Activated CD8-positive, alpha-beta T cell treated with anti-CD3 and anti-CD28 coated beads for 36 hours (primary cell): ENCODE measurements at regions of chr13 and their contacts with region 1.

Region 1: GRCh38 chr13:27424246-27425157 is at the start of gene GTF3A:
- DNase-seq: peak; percentile 85
- ATAC-seq: peak; percentile 73
- H3K4me3 Mint-ChIP-seq: peak within 1 kb of the TSS; percentile 84
- H3K27ac Mint-ChIP-seq: peak within 1 kb of the TSS; percentile 96
- H3K4me1 Mint-ChIP-seq: peaks cover 34% of the 10 kb centered on the region
- H3K27me3 Mint-ChIP-seq: no peaks in the 10 kb centered on the region
- CTCF ChIP-seq: no peak
- total RNA-seq, gene GTF3A: 278 to 282 TPM

Region 2: GRCh38 chr13:26985285-26985878 is 439.1 kb before region 1 on chr13:
- CTCF ChIA-PET with region 1: no interaction called
- POLR2A ChIA-PET with region 1: no interaction called
- intact Hi-C with region 1: no loop called
- DNase-seq: peak; percentile 86
- ATAC-seq: peak; percentile 90
- H3K4me3 Mint-ChIP-seq: no peak overlapping the region
- H3K27ac Mint-ChIP-seq: no peak overlapping the region
- H3K4me1 Mint-ChIP-seq: no peaks in the 10 kb centered on the region
- H3K27me3 Mint-ChIP-seq: peaks cover 11% of the 10 kb centered on the region
- CTCF ChIP-seq: peak; percentile 76

Region 3: GRCh38 chr13:27251166-27252091 is 173.1 kb before region 1 on chr13 and contains the start of gene RPL21:
- CTCF ChIA-PET with region 1: no interaction called
- POLR2A ChIA-PET with region 1: interaction called, 4 read pairs
- intact Hi-C with region 1: loop called (anchors 10 kb)
- DNase-seq: peak; percentile 94
- ATAC-seq: peak; percentile 94
- H3K4me3 Mint-ChIP-seq: peak within 1 kb of the TSS; percentile 96
- H3K27ac Mint-ChIP-seq: peak within 1 kb of the TSS; percentile 99
- H3K4me1 Mint-ChIP-seq: peaks cover 37% of the 10 kb centered on the region
- H3K27me3 Mint-ChIP-seq: no peaks in the 10 kb centered on the region
- CTCF ChIP-seq: no peak
- total RNA-seq, gene RPL21: 1,401 to 1,445 TPM

Region 4: DNA sequence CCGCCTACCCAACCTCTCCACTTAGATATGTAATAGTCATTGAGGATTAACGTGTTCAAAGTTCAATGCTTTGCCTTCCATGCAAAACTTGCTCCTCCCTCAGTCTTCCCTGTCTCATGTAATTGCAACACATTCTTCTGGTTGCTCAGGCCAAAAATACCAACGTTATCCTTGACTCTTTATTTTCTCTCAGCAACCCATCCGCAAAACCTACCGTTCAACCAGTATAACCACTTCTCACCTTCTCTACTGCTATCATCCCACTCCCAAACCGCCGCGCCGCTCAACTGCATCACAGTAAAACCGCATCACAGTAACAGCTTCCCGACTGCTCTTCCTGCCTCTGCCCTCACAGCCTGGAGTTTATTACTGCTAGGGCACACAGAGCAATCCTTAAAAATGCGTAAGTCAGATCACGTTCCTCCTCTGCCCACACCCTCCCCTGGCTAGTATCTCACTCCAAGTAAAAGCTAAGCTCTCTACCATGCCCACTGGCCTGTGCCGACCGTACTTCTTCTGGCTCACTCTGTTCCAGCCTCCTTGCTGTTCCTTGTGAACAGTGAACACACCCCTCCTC is 17.7 kb after region 1 on chr13:
- CTCF ChIA-PET with region 1: no interaction called
- POLR2A ChIA-PET with region 1: interaction called, 71 read pairs
- intact Hi-C with region 1: no loop called
- DNase-seq: peak; percentile 41
- ATAC-seq: peak; percentile 45
- H3K4me3 Mint-ChIP-seq: peak overlapping the region; percentile 45
- H3K27ac Mint-ChIP-seq: peak overlapping the region; percentile 59
- H3K4me1 Mint-ChIP-seq: peaks cover 48% of the 10 kb centered on the region
- H3K27me3 Mint-ChIP-seq: no peaks in the 10 kb centered on the region
- CTCF ChIP-seq: no peak

Region 5: DNA sequence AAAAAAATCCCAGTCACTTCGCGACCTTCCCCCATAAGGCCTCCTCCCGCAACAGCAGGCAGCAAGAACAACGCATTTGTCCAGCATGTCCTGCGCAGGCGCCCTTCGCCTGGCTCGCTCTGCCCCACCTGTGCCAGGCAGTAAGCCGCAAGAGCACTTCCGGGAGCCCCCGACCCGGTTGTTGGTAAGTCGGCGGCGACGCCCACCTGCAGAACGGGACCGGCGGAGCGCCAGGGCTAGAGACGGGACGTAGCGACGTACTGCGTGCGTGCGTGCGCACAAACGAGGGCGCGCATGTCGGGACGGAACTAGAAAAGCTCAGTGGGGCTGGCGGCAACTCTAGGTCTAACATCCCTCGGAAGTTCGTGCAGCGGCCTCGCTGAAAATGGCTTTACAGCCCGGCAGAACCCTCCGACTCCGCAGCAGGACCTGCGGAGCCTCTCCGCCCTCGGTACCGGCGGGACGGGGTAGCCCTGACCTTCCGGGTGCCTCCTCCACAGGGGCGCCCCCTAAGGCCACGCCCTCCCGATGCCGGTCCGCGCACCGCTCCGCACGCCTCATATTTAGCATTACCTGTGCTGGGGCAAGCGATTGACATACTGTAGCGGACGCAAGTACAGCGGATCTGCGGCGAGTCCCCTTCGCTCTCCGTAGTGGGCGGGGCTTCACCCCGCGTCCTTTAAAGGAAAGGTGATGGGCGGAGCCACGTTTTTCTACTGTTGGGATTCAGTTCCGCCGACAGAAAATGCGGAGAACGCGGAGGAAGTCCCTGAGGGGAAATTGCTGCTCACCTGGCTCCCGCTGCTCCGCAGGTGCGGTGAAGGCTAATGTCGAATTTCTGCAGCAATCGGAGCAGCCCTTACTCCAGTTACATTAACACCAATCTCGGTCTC is 25.7 kb after region 1 on chr13 and contains the start of gene MTIF3:
- CTCF ChIA-PET with region 1: interaction called, 35 read pairs
- POLR2A ChIA-PET with region 1: interaction called, 71 read pairs
- intact Hi-C with region 1: loop called (anchors 2 kb)
- DNase-seq: peak; percentile 98
- ATAC-seq: peak; percentile 86
- H3K4me3 Mint-ChIP-seq: peak within 1 kb of the TSS; percentile 82
- H3K27ac Mint-ChIP-seq: peak within 1 kb of the TSS; percentile 98
- H3K4me1 Mint-ChIP-seq: peaks cover 46% of the 10 kb centered on the region
- H3K27me3 Mint-ChIP-seq: no peaks in the 10 kb centered on the region
- CTCF ChIP-seq: no peak
- total RNA-seq, gene MTIF3: 28.0 to 29.6 TPM

Region 6: DNA sequence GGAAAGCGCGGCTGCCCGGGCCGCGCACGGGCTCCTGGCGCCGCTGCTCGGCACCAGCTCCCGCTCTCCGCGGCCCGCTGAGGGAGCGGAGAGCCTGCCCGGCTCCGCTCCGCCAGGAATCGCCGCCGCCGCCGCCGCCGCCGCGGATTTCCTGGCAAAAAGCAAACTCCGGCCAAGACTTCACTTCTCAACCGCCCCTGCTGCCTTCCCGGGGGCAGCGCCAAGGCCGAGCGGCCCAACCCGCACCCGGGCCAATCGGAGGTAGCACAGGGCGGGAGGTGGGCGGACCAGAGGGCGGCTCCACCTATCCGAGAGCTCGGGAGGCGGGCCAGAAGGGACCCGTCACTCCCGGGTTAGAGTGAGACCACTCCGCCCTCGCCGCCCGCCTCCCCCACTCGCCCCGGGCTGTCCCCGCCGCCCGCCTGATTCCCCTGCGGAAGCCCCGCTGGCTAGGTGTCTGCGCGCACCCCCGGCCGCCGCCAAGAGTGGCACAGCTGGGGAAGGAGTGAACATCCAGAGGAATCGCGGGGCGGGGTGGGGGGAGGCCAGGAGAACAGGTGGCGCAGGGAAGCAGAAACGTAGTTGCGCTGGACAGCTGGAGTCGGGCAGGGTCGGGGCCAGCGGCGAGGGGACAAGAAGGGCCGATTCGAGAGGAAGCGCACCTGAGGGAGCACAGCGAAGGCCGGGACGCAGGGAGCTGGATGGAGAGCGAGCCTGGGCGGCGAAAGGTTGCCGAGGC is 196.0 kb after region 1 on chr13 and contains the start of gene LNX2:
- CTCF ChIA-PET with region 1: interaction called, 3 read pairs
- POLR2A ChIA-PET with region 1: interaction called, 8 read pairs
- intact Hi-C with region 1: loop called (anchors 10 kb)
- DNase-seq: peak; percentile 98
- ATAC-seq: peak; percentile 91
- H3K4me3 Mint-ChIP-seq: peak within 1 kb of the TSS; percentile 86
- H3K27ac Mint-ChIP-seq: peak within 1 kb of the TSS; percentile 92
- H3K4me1 Mint-ChIP-seq: peaks cover 49% of the 10 kb centered on the region
- H3K27me3 Mint-ChIP-seq: no peaks in the 10 kb centered on the region
- CTCF ChIP-seq: no peak
- total RNA-seq, gene LNX2: 4.5 to 4.6 TPM